AG04450 (cell line): ENCODE measurements at regions of chr15 and their contacts with region 1.

Region 1: GRCh38 chr15:43763819-43764446 is 12.8 kb downstream of the ELL3 start:
- DNase-seq: no peak
- H3K4me3 ChIP-seq: no peak overlapping the region
- H3K27ac ChIP-seq: no peak overlapping the region
- H3K27me3 ChIP-seq: no peaks in the 10 kb centered on the region
- CTCF ChIP-seq: no peak

Region 2: DNA sequence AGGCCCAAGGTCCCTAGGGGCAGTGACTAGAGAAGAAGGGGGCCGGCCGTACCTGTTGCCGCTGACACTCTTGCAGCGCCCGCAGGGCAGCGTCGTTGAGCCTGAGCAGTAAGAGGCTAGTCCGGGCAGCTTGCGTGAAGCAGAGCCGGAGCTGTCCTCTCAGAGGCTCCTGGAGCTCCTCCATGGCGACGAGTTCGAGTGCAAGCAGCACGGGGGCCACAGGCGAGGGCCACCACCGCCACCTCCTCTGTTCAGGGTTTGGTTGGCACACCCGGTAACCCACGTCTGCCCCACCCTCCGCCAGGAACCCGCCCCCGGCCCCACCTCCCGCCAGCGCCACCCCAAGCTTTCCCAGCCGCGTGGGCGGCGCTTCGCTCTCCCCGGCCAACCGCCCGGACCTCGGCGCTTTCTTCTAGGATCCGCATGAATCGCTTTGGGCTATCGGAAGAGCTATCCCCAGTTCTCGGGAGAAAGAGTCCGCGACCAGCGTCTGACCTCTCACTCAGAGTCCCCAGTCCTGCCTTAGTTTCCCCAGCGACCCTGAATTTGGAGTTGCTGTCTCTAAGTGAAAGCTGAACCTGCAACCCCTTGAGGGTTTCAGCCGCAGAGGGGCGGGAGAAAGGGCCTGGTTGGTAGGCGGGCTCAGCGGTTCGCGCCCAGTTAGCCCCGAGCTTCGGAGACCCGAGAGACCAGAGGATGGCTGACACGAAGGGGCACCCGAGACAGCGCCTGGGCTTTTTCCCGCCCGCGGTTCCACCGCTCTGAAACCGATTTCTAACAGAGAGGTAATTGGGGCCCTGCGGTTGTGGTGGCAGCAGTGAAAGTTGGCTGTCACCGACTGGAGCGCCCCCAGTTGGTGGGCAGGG is 13.0 kb after region 1 on chr15 and contains the start of gene ELL3:
- CTCF ChIA-PET with region 1: interaction called, 13 read pairs
- POLR2A ChIA-PET with region 1: no interaction called
- DNase-seq: no peak
- H3K4me3 ChIP-seq: peak within 1 kb of the TSS; percentile 63
- H3K27ac ChIP-seq: peak within 1 kb of the TSS; percentile 25
- H3K27me3 ChIP-seq: no peaks in the 10 kb centered on the region
- CTCF ChIP-seq: peak; percentile 73
- polyA plus RNA-seq, gene ELL3: 2.3 and 2.4 TPM in 2 replicates

Region 3: DNA sequence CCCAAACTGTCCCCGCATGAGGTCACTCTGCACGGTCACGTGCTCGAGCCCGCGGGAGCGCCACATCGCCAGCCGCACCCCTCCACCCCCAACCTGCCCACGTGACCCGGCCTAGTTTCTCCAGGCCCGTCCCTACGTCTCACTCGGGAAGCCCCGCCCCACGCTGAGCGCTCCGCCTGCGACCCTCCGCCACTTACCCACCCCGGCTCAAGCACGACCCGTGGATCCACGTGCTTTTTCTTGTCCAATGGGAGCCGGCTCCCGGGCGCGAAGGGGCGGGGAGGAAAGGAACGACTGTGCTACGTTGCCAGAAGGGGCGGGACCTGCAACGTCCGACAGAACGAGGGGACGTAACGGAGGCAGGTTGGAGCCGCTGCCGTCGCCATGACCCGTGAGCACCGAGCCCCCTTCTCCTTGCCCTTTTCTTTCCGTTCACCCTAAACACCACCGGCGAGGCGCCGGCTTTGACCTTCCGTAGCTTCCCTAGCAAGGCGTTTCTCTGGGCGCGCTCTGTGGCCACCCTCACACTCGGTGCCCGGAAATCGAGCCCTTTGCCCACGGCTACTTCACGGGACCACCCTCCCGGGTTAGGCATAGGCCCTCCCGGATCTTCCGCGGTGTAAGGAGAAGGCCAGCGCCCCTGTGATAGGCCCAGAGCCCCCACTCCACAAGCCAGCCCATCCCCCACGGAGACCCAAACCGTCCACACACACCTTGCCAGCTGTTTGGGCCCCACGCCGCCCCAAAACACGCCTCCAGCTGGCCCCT is 28.2 kb after region 1 on chr15 and contains the start of gene SERF2:
- CTCF ChIA-PET with region 1: no interaction called
- POLR2A ChIA-PET with region 1: no interaction called
- DNase-seq: peak; percentile 99
- H3K4me3 ChIP-seq: peak within 1 kb of the TSS; percentile 100
- H3K27ac ChIP-seq: peak within 1 kb of the TSS; percentile 93
- H3K27me3 ChIP-seq: no peaks in the 10 kb centered on the region
- CTCF ChIP-seq: no peak
- polyA plus RNA-seq, gene SERF2: 608 and 874 TPM in 2 replicates